BJ (cell line): ENCODE measurements at regions of chr4 and their contacts with region 1.

Region 1: DNA sequence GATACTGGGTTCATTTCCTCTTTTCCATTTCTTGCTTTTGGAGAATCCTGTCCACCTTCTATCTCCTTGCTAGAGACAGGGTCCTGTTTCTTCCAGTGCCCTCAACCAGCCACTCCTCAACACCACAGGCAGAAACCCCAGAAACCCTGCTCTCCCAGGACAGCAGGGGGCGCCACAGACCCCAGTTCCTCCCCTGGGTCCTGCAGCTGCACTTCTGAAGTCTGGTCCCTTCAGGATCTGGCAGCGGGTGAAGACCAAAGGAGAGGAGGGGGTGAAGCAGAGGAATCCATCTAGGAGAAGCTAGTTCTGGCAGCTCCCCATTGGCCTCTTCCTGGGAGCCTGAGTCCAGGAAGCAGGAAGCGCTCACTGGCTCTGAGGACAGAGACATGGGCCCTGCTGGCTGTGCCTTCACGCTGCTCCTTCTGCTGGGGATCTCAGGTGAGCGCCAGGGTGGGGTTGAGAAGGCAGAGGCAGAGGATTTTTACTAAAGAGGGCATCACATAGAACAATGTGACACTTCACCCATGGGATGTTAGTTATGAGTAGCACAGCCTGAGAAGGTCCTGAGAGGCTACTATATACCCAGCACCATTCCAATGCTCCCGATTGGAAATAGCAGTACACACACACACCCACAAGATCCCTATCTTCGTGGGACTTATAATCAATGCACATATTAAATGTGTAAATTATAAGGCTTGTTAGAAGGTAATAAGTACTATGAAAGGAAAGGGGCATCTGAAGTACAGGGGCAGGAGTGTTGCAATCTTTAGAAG is at the start of gene PRSS48:
- DNase-seq: no peak
- H3K4me3 ChIP-seq: no peak within 1 kb of the TSS
- H3K27me3 ChIP-seq: no peaks in the 10 kb centered on the region
- CTCF ChIP-seq: peak; percentile 88
- polyA plus RNA-seq, gene PRSS48: not detected in 2 replicates

Region 2: GRCh38 chr4:151266497-151266896 is 10.5 kb before region 1 on chr4:
- CTCF ChIA-PET with region 1: interaction called, 15 read pairs
- POLR2A ChIA-PET with region 1: no interaction called
- DNase-seq: no peak
- H3K4me3 ChIP-seq: no peak overlapping the region
- H3K27me3 ChIP-seq: no peaks in the 10 kb centered on the region
- CTCF ChIP-seq: no peak